ENCODE measurements at regions of chr19 and their contacts with region 1.

Region 1: DNA sequence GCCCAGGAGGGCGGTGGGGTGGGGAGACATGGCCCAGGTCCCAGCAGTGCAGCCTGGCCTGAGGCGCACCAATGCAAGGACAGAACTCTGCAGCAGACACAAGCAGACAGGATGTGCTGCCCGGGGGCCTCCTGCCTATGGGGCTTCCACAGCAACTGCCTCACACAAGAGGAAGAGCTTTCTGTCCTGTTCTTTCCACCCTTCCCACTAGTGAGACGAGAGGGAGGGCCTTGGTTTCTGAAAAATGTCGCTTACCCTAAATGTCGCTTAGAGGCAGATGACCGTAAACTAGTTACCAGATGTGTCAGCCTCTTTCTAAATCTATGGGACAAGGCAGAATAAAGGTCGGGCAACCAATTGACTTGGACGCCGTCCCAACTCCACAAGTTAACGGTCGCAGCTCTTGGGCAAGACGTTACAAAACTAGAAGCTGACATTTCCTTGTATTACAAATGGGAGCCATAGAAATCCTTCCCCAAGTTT is at the start of gene LAIR1:
- DNase-seq: peak in 8 of 9 experiments; percentile 44 to 78 (median 58)
- ATAC-seq: peak; percentile 54
- H3K4me3 ChIP-seq: peak within 1 kb of the TSS; percentile 53 to 83
- H3K4me3 Mint-ChIP-seq: peak within 1 kb of the TSS; percentile 91
- H3K27ac ChIP-seq: peak within 1 kb of the TSS; percentile 50 to 56
- H3K27ac Mint-ChIP-seq: peak within 1 kb of the TSS; percentile 90
- H3K4me1 ChIP-seq: peaks cover 50% of the 10 kb centered on the region
- H3K4me1 Mint-ChIP-seq: peaks cover 75% of the 10 kb centered on the region
- H3K27me3 ChIP-seq: no peaks in the 10 kb centered on the region
- H3K27me3 Mint-ChIP-seq: no peaks in the 10 kb centered on the region
- CTCF ChIP-seq: no peak
- total RNA-seq, gene LAIR1: 15.3 TPM

Region 2: GRCh38 chr19:54379187-54379678 is 14.4 kb after region 1 on chr19:
- CTCF ChIA-PET with region 1: interaction called, 4 read pairs
- POLR2A ChIA-PET with region 1: interaction called, 8 read pairs
- intact Hi-C with region 1: loop called in 1 of 2 experiments (anchors 1 kb)
- DNase-seq: no peak
- ATAC-seq: no peak
- H3K4me3 ChIP-seq: no peak overlapping the region
- H3K4me3 Mint-ChIP-seq: no peak overlapping the region
- H3K27ac ChIP-seq: no peak overlapping the region
- H3K27ac Mint-ChIP-seq: no peak overlapping the region
- H3K4me1 ChIP-seq: peaks cover 52% of the 10 kb centered on the region
- H3K4me1 Mint-ChIP-seq: peaks cover 63% of the 10 kb centered on the region
- H3K27me3 ChIP-seq: no peaks in the 10 kb centered on the region
- H3K27me3 Mint-ChIP-seq: no peaks in the 10 kb centered on the region
- CTCF ChIP-seq: no peak